Dorsolateral prefrontal cortex (tissue), 120 donors: ENCODE measurements at regions of chr4 and their contacts with region 1.

Region 1: DNA sequence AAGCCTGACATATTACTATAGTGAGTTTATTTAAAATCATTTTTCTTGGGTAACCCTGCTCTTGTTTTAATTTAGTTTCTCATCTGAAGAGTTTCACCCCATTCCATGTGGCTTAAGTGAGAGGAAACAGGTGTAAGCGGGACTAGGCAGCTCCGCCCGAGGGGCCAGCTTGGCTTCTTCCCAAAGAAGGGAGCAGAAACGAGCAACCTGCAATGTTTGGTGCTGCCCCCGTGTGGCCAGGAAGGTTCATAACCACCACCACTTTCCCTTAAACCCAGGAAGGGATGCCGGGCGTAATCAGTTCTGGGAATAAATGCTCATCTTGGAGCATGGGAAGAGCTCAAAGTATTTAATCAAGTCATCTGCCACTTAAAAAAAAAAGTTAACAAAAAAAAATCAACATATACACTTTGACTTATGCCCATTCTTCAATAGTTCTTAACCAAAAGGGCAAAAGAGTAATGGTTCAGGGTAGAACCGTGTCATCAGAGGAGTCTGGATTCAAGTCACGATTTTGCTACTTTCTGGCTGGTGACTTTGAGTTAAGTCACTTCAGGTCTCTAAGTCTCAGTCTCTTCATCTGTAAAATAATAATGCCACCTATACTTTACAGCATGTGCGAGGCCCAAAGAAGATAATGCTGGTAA is 147.9 kb downstream of the NSUN7 start:
- DNase-seq: peak; percentile 46 to 83 (median 73)
- H3K4me3 ChIP-seq: peak overlapping the region in 21 of 59 donors; percentile 4 to 43 (median 32)
- H3K27ac ChIP-seq: peak overlapping the region in 4 of 59 donors; percentile 7 to 66 (median 10)
- H3K27me3 ChIP-seq: no peaks in the 10 kb centered on the region
- CTCF ChIP-seq: peak; percentile 60 to 93 (median 86)

Region 2: GRCh38 chr4:40840985-40841571 is 56.6 kb before region 1 on chr4:
- intact Hi-C with region 1: loop called (anchors 2 to 5 kb)
- DNase-seq: peak; percentile 16 to 92 (median 79)
- H3K4me3 ChIP-seq: no peak overlapping the region
- H3K27ac ChIP-seq: peak overlapping the region in 11 of 59 donors; percentile 5 to 72 (median 47)
- H3K27me3 ChIP-seq: no peaks in the 10 kb centered on the region
- CTCF ChIP-seq: peak; percentile 35 to 89 (median 76)

Region 3: GRCh38 chr4:40856822-40857362 is 40.8 kb before region 1 on chr4:
- intact Hi-C with region 1: loop called in 1 of 2 experiments (anchors 5 kb)
- DNase-seq: peak in 9 of 10 donors; percentile 46 to 85 (median 66)
- H3K4me3 ChIP-seq: peak overlapping the region; percentile 11 to 75 (median 63)
- H3K27ac ChIP-seq: peak overlapping the region in 8 of 59 donors; percentile 2 to 55 (median 18)
- H3K27me3 ChIP-seq: no peaks in the 10 kb centered on the region
- CTCF ChIP-seq: peak in 6 of 56 donors; percentile 8 to 35 (median 16)